SK-N-SH (cell line): ENCODE measurements at regions of chr5 and their contacts with region 1.

Region 1: DNA sequence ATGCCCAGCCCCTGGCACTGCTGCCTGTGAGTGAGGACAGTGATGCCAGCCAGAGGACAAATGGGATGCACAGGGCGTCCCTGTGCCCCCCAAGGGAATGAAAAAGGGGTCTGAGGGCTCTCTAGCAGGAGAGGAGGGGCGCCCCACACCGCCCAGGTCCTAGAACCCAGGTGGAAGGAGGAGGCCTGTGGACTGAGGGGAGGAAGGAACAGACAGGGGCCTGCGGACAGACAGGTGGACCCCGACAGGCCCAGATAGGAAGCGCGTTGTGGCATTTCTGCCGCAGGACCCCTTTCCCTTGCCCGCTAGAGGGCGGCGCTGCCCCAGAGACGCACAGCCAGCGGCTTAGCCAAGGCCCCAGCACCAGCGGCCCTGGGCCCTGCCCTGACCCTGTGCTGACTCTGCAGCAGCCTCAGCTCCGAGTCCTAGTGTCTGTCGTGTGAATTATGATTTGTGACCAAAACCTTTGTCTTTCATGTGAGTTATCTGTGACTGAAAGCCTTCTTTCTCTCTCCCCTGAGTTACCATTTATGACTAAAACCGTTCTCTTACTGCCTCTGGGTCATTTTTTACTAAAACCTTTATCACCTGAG is 30.7 kb downstream of the TRIP13 start:
- DNase-seq: peak; percentile 94
- H3K4me3 ChIP-seq: peak overlapping the region in 1 of 2 experiments; percentile 7; a peak in 1 of 4 replicates
- H3K27ac ChIP-seq: no peak overlapping the region
- H3K4me1 ChIP-seq: no peaks in the 10 kb centered on the region
- H3K27me3 ChIP-seq: no peaks in the 10 kb centered on the region
- CTCF ChIP-seq: peak; percentile 83
- EP300 ChIP-seq: no peak
- RAD21 ChIP-seq: peak; percentile 91

Region 2: GRCh38 chr5:849651-850301 is 73.6 kb before region 1 on chr5:
- CTCF ChIA-PET with region 1: no interaction called
- POLR2A ChIA-PET with region 1: no interaction called
- DNase-seq: no peak
- H3K4me3 ChIP-seq: peak overlapping the region in 1 of 2 experiments; percentile 28; a peak in 1 of 4 replicates
- H3K27ac ChIP-seq: no peak overlapping the region
- H3K4me1 ChIP-seq: peaks cover 0 to 13% of the 10 kb centered on the region in 2 experiments; a peak in 1 of 4 replicates
- H3K27me3 ChIP-seq: peaks cover 48% of the 10 kb centered on the region
- CTCF ChIP-seq: no peak
- EP300 ChIP-seq: no peak
- RAD21 ChIP-seq: no peak

Region 3: GRCh38 chr5:945691-946551 is 22.5 kb after region 1 on chr5:
- CTCF ChIA-PET with region 1: interaction called, 12 read pairs
- POLR2A ChIA-PET with region 1: no interaction called
- DNase-seq: peak; percentile 69
- H3K4me3 ChIP-seq: no peak overlapping the region; a peak in 1 of 4 replicates
- H3K27ac ChIP-seq: peak overlapping the region in 1 of 2 experiments; percentile 47; a peak in 2 of 4 replicates
- H3K4me1 ChIP-seq: peaks cover 0 to 36% of the 10 kb centered on the region in 2 experiments; a peak in 1 of 4 replicates
- H3K27me3 ChIP-seq: peaks cover 27% of the 10 kb centered on the region
- CTCF ChIP-seq: no peak
- EP300 ChIP-seq: no peak
- RAD21 ChIP-seq: no peak

Region 4: DNA sequence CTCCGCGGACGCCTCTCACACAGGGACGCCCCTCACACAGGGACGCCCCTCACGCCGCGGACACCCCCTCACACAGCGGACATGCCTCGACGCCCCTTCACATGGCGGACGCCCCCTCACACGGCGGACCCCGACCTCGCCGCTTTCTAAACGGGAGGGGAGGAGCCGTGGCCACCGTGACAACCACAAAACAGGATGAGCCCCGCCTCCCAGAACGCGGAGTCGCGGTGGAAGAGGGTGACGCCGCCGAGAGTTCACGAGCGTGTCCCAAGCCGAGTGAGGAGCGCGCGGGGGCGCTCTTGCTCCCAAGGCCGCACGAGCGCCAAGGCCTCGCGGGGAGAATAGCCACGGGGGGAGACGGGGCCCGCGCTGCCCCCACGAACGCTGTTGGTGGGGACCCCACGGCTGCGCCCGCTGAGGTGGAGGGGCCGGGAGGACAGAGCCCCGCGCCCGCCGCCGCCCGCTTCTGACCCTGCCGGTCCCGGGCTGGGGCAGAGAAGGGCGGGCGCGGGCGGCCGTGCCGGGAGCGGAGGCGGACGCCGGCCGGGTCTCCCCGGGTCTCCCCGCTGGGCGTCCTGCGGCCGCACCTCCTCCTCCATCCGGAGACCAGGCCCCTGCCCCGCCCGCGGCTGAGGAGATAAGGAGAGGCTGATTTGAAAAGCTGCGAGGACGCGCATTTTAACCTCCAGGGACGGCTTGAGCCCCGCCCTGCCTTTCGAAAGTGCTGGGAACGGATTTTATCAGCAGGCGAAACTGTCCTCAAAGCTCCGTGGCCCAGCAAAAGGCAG is 81.3 kb after region 1 on chr5:
- CTCF ChIA-PET with region 1: interaction called, 16 read pairs
- POLR2A ChIA-PET with region 1: no interaction called
- DNase-seq: peak; percentile 78
- H3K4me3 ChIP-seq: peak overlapping the region; percentile 31 to 37; a peak in 2 of 4 replicates
- H3K27ac ChIP-seq: no peak overlapping the region
- H3K4me1 ChIP-seq: peaks cover 0 to 2% of the 10 kb centered on the region in 2 experiments; a peak in 1 of 4 replicates
- H3K27me3 ChIP-seq: peaks cover 54% of the 10 kb centered on the region
- CTCF ChIP-seq: no peak; the same call in 1 of the 2 replicates
- EP300 ChIP-seq: no peak
- RAD21 ChIP-seq: peak; percentile 19; the same call in 1 of the 2 replicates

Region 5: GRCh38 chr5:1080432-1080831 is 157.1 kb after region 1 on chr5:
- CTCF ChIA-PET with region 1: no interaction called
- POLR2A ChIA-PET with region 1: no interaction called
- DNase-seq: no peak
- H3K4me3 ChIP-seq: no peak overlapping the region
- H3K27ac ChIP-seq: no peak overlapping the region
- H3K4me1 ChIP-seq: no peaks in the 10 kb centered on the region
- H3K27me3 ChIP-seq: no peaks in the 10 kb centered on the region
- CTCF ChIP-seq: no peak
- EP300 ChIP-seq: no peak
- RAD21 ChIP-seq: no peak

Region 6: DNA sequence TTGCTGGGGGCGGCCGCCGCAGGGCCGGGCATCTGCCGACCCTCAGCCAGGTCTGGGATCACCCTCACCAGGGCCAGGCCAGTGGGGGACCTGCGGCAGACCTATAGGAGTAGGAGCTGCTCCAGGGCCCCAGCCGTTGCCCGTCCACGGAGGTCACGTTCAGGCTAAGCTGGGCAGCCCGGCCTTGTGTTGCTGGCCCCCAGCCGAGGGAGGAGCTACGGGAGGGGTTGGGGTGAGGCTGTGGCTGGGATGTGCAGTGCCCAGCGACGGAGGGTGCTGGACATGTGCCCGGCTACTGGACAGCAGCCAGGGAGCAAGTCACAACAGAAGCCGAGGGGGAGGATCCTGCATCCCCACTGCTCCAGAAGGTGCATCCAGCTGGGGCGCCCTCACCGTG is 238.5 kb after region 1 on chr5:
- CTCF ChIA-PET with region 1: interaction called, 119 read pairs
- POLR2A ChIA-PET with region 1: no interaction called
- DNase-seq: peak; percentile 88
- H3K4me3 ChIP-seq: no peak overlapping the region
- H3K27ac ChIP-seq: no peak overlapping the region
- H3K4me1 ChIP-seq: peaks cover 0 to 12% of the 10 kb centered on the region in 2 experiments; a peak in 1 of 4 replicates
- H3K27me3 ChIP-seq: no peaks in the 10 kb centered on the region
- CTCF ChIP-seq: no peak
- EP300 ChIP-seq: no peak
- RAD21 ChIP-seq: no peak

Region 7: GRCh38 chr5:1174122-1174936 is 251.0 kb after region 1 on chr5:
- CTCF ChIA-PET with region 1: interaction called, 119 read pairs
- POLR2A ChIA-PET with region 1: no interaction called
- DNase-seq: peak; percentile 82
- H3K4me3 ChIP-seq: no peak overlapping the region; a peak in 1 of 4 replicates
- H3K27ac ChIP-seq: no peak overlapping the region
- H3K4me1 ChIP-seq: no peaks in the 10 kb centered on the region; a peak in 1 of 4 replicates
- H3K27me3 ChIP-seq: no peaks in the 10 kb centered on the region
- CTCF ChIP-seq: peak; percentile 82
- EP300 ChIP-seq: no peak
- RAD21 ChIP-seq: peak; percentile 71